ENCODE measurements at regions of chr17 and their contacts with region 1.

Region 1: DNA sequence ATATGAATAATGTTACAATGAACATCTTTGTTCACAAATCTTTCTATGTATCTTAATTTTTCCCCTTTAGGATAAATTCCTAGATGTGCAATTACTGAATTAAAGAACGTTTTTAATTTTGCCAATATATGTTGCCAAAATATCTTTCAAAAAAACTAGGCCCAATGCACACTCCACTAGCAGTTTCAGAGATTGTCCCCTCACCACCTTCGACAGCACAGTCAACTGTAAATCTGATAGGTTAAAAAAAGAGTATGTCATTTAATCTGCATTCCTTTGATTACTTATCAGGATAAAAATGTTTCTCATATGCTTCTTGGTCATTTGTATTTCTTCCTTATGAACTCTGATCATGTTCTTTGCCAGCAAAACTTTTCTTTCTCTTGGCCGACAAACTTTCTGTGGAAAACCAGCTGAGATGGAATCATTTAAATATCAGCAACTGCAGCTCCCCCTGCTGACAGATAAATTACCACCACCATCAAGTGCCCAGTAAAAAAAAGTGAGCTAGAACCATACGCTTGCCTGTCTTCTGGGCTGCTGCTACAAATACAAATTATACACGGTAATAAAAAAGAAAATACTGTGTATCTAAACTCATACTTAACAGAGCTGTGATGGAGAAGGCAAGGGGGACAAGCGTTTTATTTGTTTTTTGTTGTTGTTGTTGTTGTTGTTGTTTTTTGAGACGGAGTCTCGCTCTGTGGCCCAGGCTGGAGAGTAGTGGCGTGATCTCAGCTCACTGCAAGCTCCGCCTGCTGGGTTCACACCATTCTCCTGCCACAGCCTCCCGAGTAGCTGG is 19.6 kb upstream of the KANSL1 start:
- DNase-seq: peak; percentile 69
- H3K4me3 Mint-ChIP-seq: no peak overlapping the region
- H3K27ac Mint-ChIP-seq: no peak overlapping the region
- H3K4me1 Mint-ChIP-seq: peaks cover 23% of the 10 kb centered on the region
- H3K27me3 Mint-ChIP-seq: no peaks in the 10 kb centered on the region

Region 2: GRCh38 chr17:46002311-46002972 is 210.4 kb before region 1 on chr17:
- CTCF ChIA-PET with region 1: interaction called, 11 read pairs
- POLR2A ChIA-PET with region 1: no interaction called
- DNase-seq: peak; percentile 79
- H3K4me3 Mint-ChIP-seq: no peak overlapping the region
- H3K27ac Mint-ChIP-seq: no peak overlapping the region
- H3K4me1 Mint-ChIP-seq: peaks cover 6% of the 10 kb centered on the region
- H3K27me3 Mint-ChIP-seq: peaks cover 3% of the 10 kb centered on the region

Region 3: GRCh38 chr17:46193626-46194392 is 19.0 kb before region 1 on chr17:
- CTCF ChIA-PET with region 1: interaction called, 28 read pairs
- POLR2A ChIA-PET with region 1: interaction called, 3 read pairs
- DNase-seq: peak; percentile 94
- H3K4me3 Mint-ChIP-seq: peak overlapping the region; percentile 74
- H3K27ac Mint-ChIP-seq: peak overlapping the region; percentile 99
- H3K4me1 Mint-ChIP-seq: peaks cover 54% of the 10 kb centered on the region
- H3K27me3 Mint-ChIP-seq: no peaks in the 10 kb centered on the region

Region 4: GRCh38 chr17:46199379-46199778 is 13.5 kb before region 1 on chr17:
- CTCF ChIA-PET with region 1: interaction called, 28 read pairs
- POLR2A ChIA-PET with region 1: no interaction called
- DNase-seq: no peak
- H3K4me3 Mint-ChIP-seq: no peak overlapping the region
- H3K27ac Mint-ChIP-seq: no peak overlapping the region
- H3K4me1 Mint-ChIP-seq: peaks cover 49% of the 10 kb centered on the region
- H3K27me3 Mint-ChIP-seq: no peaks in the 10 kb centered on the region